ENCODE measurements at regions of chr5 and their contacts with region 1.

Region 1: GRCh38 chr5:76787237-76787636 is 31.6 kb upstream of the F2RL1 start:
- DNase-seq: peak; percentile 25 to 57
- ATAC-seq: peak; percentile 79
- H3K4me3 ChIP-seq: no peak overlapping the region
- H3K27ac ChIP-seq: peak overlapping the region in 3 of 4 donors; percentile 33 to 61 (median 48)
- H3K4me1 ChIP-seq: peaks cover 4% of the 10 kb centered on the region in 2 donors
- H3K27me3 ChIP-seq: no peaks in the 10 kb centered on the region
- CTCF ChIP-seq: no peak
- POLR2A ChIP-seq: no peak

Region 2: DNA sequence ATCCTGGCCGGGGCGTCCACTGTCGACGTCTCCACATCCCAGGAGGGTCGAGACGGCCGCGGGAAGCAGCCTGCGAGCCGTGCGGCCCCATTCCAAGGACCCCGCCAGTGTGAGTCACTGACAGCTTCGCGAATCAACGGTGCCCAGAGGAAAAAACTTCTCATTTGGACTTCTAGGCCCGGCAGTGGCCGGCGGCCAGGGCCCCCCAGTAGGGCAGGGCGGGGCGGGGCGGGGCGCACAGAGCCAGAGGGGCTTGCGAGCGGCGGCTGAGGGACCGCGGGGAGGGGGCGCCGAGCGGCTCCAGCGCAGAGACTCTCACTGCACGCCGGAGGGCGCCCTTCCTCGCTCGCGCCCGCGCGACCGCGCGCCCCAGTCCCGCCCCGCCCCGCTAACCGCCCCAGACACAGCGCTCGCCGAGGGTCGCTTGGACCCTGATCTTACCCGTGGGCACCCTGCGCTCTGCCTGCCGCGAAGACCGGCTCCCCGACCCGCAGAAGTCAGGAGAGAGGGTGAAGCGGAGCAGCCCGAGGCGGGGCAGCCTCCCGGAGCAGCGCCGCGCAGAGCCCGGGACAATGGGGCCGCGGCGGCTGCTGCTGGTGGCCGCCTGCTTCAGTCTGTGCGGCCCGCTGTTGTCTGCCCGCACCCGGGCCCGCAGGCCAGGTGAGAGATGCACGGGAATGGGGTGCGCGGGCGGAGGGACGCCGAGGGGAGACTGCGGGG is 71.3 kb before region 1 on chr5 and contains the start of gene F2R:
- in situ Hi-C with region 1: no loop called
- intact Hi-C with region 1: loop called (anchors 10 kb)
- DNase-seq: peak in 1 of 2 donors; percentile 22
- ATAC-seq: peak; percentile 58 to 69
- H3K4me3 ChIP-seq: peak within 1 kb of the TSS; percentile 57 to 67 (median 61)
- H3K27ac ChIP-seq: peak within 1 kb of the TSS; percentile 26 to 53 (median 39)
- H3K4me1 ChIP-seq: peaks cover 0 to 6% of the 10 kb centered on the region in 2 donors
- H3K27me3 ChIP-seq: peaks cover 4 to 32% (median 16%) of the 10 kb centered on the region in 3 donors
- CTCF ChIP-seq: peak in 1 of 5 experiments; percentile 33
- POLR2A ChIP-seq: no peak
- total RNA-seq, gene F2R: 2.4 to 4.2 (median 3.8) TPM

Region 3: DNA sequence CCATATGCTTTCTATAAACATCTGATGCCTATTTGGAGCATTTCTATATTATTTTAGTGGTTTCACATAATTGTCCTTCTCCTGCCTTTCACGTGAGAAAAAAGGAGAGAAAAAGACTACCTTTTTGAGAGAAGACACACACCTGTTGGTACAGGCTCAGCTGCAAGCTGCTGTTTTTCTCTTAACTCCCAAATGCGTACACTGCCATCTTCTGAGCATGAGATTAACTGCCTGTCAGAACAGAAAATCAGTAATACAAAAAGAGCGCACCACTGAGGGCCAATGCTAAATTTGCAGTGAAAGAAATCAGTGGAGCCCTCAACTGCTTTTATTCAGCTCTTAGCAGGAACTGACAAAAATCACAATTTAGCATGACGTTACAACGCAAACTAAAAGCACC is 650.0 kb after region 1 on chr5:
- in situ Hi-C with region 1: no loop called
- intact Hi-C with region 1: no loop called
- DNase-seq: no peak
- ATAC-seq: no peak
- H3K4me3 ChIP-seq: no peak overlapping the region
- H3K27ac ChIP-seq: no peak overlapping the region
- H3K4me1 ChIP-seq: no peaks in the 10 kb centered on the region
- H3K27me3 ChIP-seq: no peaks in the 10 kb centered on the region
- CTCF ChIP-seq: no peak
- POLR2A ChIP-seq: no peak